Natural killer cell (primary cell): ENCODE measurements at regions of chr1 and their contacts with region 1.

Region 1: GRCh38 chr1:192609110-192610079 is 26.6 kb upstream of the RGS13 start:
- DNase-seq: peak; percentile 75 to 83
- ATAC-seq: peak; percentile 87 to 94 (median 93)
- H3K4me3 ChIP-seq: no peak overlapping the region
- H3K4me3 Mint-ChIP-seq: peak overlapping the region; percentile 78
- H3K27ac ChIP-seq: peak overlapping the region; percentile 70
- H3K27ac Mint-ChIP-seq: peak overlapping the region; percentile 80 to 96
- H3K4me1 ChIP-seq: peaks cover 14% of the 10 kb centered on the region
- H3K4me1 Mint-ChIP-seq: peaks cover 27 to 43% of the 10 kb centered on the region in 2 donors
- H3K27me3 ChIP-seq: no peaks in the 10 kb centered on the region
- H3K27me3 Mint-ChIP-seq: peaks cover 0 to 3% of the 10 kb centered on the region in 2 donors
- CTCF ChIP-seq: no peak

Region 2: GRCh38 chr1:192327997-192328396 is 281.4 kb before region 1 on chr1:
- intact Hi-C with region 1: no loop called
- DNase-seq: no peak
- ATAC-seq: no peak
- H3K4me3 ChIP-seq: no peak overlapping the region
- H3K4me3 Mint-ChIP-seq: no peak overlapping the region
- H3K27ac ChIP-seq: no peak overlapping the region
- H3K27ac Mint-ChIP-seq: no peak overlapping the region
- H3K4me1 ChIP-seq: no peaks in the 10 kb centered on the region
- H3K4me1 Mint-ChIP-seq: no peaks in the 10 kb centered on the region
- H3K27me3 ChIP-seq: no peaks in the 10 kb centered on the region
- H3K27me3 Mint-ChIP-seq: no peaks in the 10 kb centered on the region
- CTCF ChIP-seq: no peak

Region 3: DNA sequence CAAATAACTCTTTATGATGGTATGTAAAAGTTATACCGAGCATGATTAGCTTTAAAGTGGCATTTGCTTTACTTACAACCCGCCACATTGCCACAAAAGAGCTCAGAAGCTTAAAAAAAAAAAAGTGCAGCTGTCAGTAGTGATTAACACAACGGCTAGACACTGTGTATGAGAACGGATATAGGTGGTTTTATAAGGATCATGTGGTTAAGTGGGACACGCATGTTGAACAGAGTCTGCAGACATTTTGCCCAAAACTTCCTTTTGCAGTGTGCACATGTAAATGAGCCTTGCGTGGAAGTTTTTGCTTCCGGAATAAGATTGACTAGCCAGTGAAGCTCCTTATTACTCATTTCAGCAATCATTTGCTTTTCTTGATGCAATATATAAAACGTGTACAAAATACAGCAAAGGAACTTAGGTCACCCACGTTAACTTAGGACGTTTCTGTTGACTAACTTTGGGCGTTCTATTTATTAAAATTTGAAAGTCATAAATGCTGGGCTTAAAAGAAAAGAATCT is 92.6 kb before region 1 on chr1:
- intact Hi-C with region 1: loop called (anchors 1 kb)
- DNase-seq: peak; percentile 25 to 94
- ATAC-seq: peak; percentile 85 to 94 (median 93)
- H3K4me3 ChIP-seq: peak overlapping the region; percentile 1
- H3K4me3 Mint-ChIP-seq: peak overlapping the region; percentile 80
- H3K27ac ChIP-seq: peak overlapping the region; percentile 77
- H3K27ac Mint-ChIP-seq: peak overlapping the region; percentile 94 to 95
- H3K4me1 ChIP-seq: peaks cover 12% of the 10 kb centered on the region
- H3K4me1 Mint-ChIP-seq: peaks cover 59 to 65% of the 10 kb centered on the region in 2 donors
- H3K27me3 ChIP-seq: no peaks in the 10 kb centered on the region
- H3K27me3 Mint-ChIP-seq: no peaks in the 10 kb centered on the region
- CTCF ChIP-seq: no peak

Region 4: GRCh38 chr1:192550922-192551534 is 58.4 kb before region 1 on chr1:
- intact Hi-C with region 1: no loop called
- DNase-seq: peak in 1 of 2 donors; percentile 35
- ATAC-seq: peak; percentile 28 to 52 (median 46)
- H3K4me3 ChIP-seq: no peak overlapping the region
- H3K4me3 Mint-ChIP-seq: no peak overlapping the region
- H3K27ac ChIP-seq: no peak overlapping the region
- H3K27ac Mint-ChIP-seq: peak overlapping the region in 1 of 2 donors; percentile 25
- H3K4me1 ChIP-seq: peaks cover under 1% of the 10 kb centered on the region
- H3K4me1 Mint-ChIP-seq: peaks cover 32 to 38% of the 10 kb centered on the region in 2 donors
- H3K27me3 ChIP-seq: no peaks in the 10 kb centered on the region
- H3K27me3 Mint-ChIP-seq: no peaks in the 10 kb centered on the region
- CTCF ChIP-seq: no peak

Region 5: GRCh38 chr1:192592981-192593708 is 16.2 kb before region 1 on chr1:
- intact Hi-C with region 1: no loop called
- DNase-seq: no peak
- ATAC-seq: no peak
- H3K4me3 ChIP-seq: no peak overlapping the region
- H3K4me3 Mint-ChIP-seq: no peak overlapping the region
- H3K27ac ChIP-seq: no peak overlapping the region
- H3K27ac Mint-ChIP-seq: no peak overlapping the region
- H3K4me1 ChIP-seq: no peaks in the 10 kb centered on the region
- H3K4me1 Mint-ChIP-seq: no peaks in the 10 kb centered on the region
- H3K27me3 ChIP-seq: no peaks in the 10 kb centered on the region
- H3K27me3 Mint-ChIP-seq: peaks cover 8 to 18% of the 10 kb centered on the region in 2 donors
- CTCF ChIP-seq: no peak

Region 6: GRCh38 chr1:192668434-192668983 is 59.1 kb after region 1 on chr1:
- intact Hi-C with region 1: loop called (anchors 10 kb)
- DNase-seq: no peak
- ATAC-seq: no peak
- H3K4me3 ChIP-seq: no peak overlapping the region
- H3K4me3 Mint-ChIP-seq: no peak overlapping the region
- H3K27ac ChIP-seq: no peak overlapping the region
- H3K27ac Mint-ChIP-seq: no peak overlapping the region
- H3K4me1 ChIP-seq: no peaks in the 10 kb centered on the region
- H3K4me1 Mint-ChIP-seq: no peaks in the 10 kb centered on the region
- H3K27me3 ChIP-seq: no peaks in the 10 kb centered on the region
- H3K27me3 Mint-ChIP-seq: peaks cover 9 to 19% of the 10 kb centered on the region in 2 donors
- CTCF ChIP-seq: no peak

Region 7: GRCh38 chr1:193059268-193060225 is 450.2 kb after region 1 on chr1 and contains the starts of genes RO60 and UCHL5:
- intact Hi-C with region 1: loop called (anchors 1 kb)
- DNase-seq: peak; percentile 87 to 98
- ATAC-seq: peak; percentile 85 to 96 (median 88)
- H3K4me3 ChIP-seq: peak within 1 kb of the TSS; percentile 99
- H3K4me3 Mint-ChIP-seq: peak within 1 kb of the TSS; percentile 98
- H3K27ac ChIP-seq: peak within 1 kb of the TSS; percentile 98
- H3K27ac Mint-ChIP-seq: peak within 1 kb of the TSS; percentile 98
- H3K4me1 ChIP-seq: peaks cover 14% of the 10 kb centered on the region
- H3K4me1 Mint-ChIP-seq: peaks cover 67 to 77% of the 10 kb centered on the region in 2 donors
- H3K27me3 ChIP-seq: no peaks in the 10 kb centered on the region
- H3K27me3 Mint-ChIP-seq: no peaks in the 10 kb centered on the region
- CTCF ChIP-seq: no peak
- total RNA-seq, gene RO60: 74.3 to 95.5 (median 78.9) TPM
- total RNA-seq, gene UCHL5: 44.3 to 53.9 (median 51.9) TPM